ENCODE measurements at regions of chr11 and their contacts with region 1.

Region 1: GRCh38 chr11:5011254-5011653 is 16.6 kb downstream of the OR51L1 start:
- DNase-seq: no peak
- H3K4me3 ChIP-seq: no peak overlapping the region
- H3K27ac ChIP-seq: no peak overlapping the region
- H3K4me1 ChIP-seq: no peaks in the 10 kb centered on the region
- H3K27me3 ChIP-seq: no peaks in the 10 kb centered on the region
- CTCF ChIP-seq: no peak
- POLR2A ChIP-seq: no peak

Region 2: GRCh38 chr11:4643076-4643475 is 368.2 kb before region 1 on chr11:
- intact Hi-C with region 1: loop called (anchors 10 kb)
- DNase-seq: no peak
- H3K4me3 ChIP-seq: no peak overlapping the region
- H3K27ac ChIP-seq: no peak overlapping the region
- H3K4me1 ChIP-seq: no peaks in the 10 kb centered on the region
- H3K27me3 ChIP-seq: peaks cover 0 to 17% (median 0%) of the 10 kb centered on the region in 7 donors
- CTCF ChIP-seq: no peak
- POLR2A ChIP-seq: no peak

Region 3: DNA sequence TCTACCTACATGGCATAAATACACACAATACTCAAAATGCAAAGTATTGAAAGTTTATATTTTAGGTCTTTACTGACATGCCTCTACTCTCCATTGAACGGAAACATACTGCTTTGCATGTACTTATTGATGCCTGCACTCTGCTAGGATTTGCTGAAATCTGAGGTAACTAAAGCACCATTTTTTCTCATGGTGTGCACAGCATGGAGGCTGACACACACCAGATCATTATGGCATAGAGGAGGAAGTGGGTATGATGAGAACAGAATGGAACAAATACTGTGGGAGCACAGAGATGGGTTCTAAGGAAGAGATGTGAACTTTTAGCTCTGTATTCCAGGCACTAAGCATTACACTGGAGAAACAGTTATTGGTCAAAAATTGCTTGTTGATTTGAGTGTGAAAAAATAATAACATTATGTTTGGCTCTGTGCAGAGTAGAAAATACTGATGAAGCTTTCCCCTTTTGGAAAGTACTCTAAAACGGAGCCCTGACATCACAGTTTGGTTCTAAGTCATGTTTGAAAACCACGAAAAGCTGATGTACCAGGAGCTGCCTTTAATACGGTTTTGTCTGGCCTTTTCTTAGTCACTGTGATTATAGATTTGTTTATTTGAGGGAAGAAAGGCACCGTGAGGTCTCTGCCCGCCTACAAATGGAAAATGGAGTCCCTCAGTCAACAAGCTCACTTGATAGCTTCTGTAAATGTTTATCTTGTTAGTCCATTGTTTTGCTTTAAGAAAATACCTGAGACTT is 212.6 kb before region 1 on chr11:
- intact Hi-C with region 1: no loop called
- DNase-seq: no peak
- H3K4me3 ChIP-seq: no peak overlapping the region
- H3K27ac ChIP-seq: no peak overlapping the region
- H3K4me1 ChIP-seq: no peaks in the 10 kb centered on the region
- H3K27me3 ChIP-seq: no peaks in the 10 kb centered on the region
- CTCF ChIP-seq: no peak
- POLR2A ChIP-seq: no peak